ENCODE measurements at regions of chr19 and their contacts with region 1.

Region 1: GRCh38 chr19:52139252-52140031 is at the start of gene ZNF616:
- DNase-seq: peak; percentile 97
- ATAC-seq: peak; percentile 97
- total RNA-seq, gene ZNF616: 5.2 TPM

Region 2: GRCh38 chr19:52171321-52172169 is 32.1 kb after region 1 on chr19 and contains the start of gene ZNF836:
- intact Hi-C with region 1: loop called (anchors 2 kb)
- DNase-seq: peak; percentile 94
- ATAC-seq: peak; percentile 98
- total RNA-seq, gene ZNF836: 6.8 TPM

Region 3: GRCh38 chr19:52189735-52190486 is 50.5 kb after region 1 on chr19 and contains the start of gene PPP2R1A:
- intact Hi-C with region 1: loop called (anchors 1 kb)
- DNase-seq: peak; percentile 99
- ATAC-seq: peak; percentile 96
- total RNA-seq, gene PPP2R1A: 338 TPM

Region 4: DNA sequence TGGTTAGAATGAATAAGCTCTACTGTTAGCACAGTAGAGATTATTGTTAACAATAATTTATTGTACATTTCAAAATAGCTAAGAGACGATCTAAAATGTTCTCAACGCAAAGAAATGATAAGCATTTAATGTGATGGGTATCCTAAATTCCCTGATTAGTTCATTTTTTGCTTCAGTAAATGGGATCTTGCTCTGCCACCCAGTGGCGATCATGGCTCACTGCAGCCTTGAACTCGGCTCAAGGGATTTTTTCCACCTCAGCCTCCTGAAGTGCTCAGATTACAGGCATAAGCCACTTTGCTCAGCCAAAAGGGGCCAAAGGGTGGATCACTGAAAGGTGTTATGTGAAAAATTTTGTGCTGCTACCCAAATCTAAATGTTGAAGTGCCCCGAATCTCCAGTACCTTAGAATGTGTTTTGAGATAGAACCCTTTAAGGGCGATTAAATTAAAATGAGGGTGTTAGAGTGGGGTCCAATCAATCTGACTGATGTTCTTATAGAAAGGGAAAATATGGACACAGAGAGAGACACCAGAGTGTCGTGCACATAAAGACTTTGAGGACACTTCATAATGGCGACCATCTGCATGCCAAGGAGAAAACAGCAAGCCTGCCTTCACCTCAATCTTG is 98.4 kb after region 1 on chr19:
- intact Hi-C with region 1: loop called (anchors 1 kb)
- DNase-seq: no peak
- ATAC-seq: no peak

Region 5: DNA sequence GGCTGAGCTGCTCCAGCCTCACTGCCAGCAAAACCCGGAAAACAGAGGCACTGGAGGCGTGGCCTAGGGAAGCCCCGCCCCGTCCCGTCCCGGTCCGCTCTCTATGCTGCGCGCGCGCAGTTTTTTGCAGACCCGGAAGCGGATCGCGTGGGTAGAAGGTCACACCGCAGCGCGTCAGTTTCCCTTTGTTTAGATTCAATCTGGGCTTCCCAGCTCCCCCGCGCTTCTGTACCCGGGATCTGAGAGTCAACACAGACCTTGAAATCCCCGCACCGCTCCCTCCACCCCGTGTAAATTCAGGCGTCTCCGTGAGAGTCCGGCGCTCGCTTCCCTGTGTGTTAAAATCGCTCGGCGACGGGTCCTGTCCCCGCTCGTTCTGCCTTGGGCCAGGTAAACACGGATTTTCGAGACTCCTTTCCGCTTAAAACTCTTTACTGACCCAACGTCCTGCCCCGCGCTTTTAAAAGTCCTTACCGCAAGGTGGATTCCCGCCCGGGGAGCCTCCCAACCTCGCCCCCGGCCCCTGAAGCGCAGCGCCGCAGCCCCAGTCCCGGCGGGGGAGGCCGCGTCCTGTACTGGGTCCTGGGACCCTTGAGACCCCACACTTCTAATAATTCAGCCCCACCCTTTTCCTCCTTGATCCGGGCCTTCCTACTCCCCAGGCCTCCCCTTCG is 196.8 kb after region 1 on chr19 and contains the start of gene ZNF610:
- intact Hi-C with region 1: no loop called
- DNase-seq: peak; percentile 91
- ATAC-seq: peak; percentile 99
- total RNA-seq, gene ZNF610: 2.5 TPM

Measured in Right ventricle myocardium inferior (tissue), 1 donor.